ENCODE measurements at regions of chr18 and their contacts with region 1.

Region 1: DNA sequence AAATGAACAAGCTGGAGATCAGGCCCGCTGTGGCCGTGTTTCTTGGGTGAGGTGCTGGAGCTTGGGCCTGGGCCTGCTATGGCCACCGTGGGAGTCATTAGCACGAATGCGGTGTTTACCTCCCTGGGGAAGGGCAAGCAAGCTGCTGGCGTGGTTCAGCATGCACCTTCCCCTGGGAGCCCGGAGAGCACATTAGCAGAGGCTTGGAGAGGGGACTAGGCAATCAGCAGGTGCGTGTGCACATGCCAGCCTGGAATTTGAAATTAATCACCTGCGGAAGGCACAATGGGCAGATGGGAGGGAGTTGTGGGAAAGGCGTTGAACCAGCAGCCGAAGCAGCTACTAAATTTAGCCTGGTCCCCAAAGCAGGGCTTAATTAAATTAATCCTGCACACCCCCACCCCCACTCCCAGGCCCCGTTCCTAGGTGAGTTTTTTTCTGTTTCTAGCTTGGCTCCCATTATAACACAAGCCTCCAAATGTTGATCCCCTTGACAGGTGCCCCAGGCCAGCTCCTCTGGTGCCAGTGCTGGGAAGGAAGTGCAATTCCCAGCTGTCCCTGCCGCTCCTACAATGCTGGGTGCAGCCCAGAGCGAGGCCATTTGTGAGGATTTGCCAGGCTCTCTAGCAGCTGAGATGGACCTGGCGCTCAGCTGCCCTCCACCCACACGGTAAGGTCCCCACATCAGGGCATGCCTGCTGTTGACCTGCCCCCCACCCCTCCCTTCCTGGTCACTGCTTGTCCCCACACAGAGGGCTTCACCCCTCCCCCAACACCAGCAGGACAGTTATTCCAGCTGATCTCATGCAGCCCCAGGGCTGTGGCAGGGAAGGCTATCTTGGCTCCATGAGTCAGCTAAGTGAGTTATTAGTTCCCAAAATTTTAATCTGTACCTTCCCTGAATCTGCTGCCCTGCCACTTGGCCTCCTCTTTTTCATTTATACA is 115.0 kb downstream of the ZBTB7C start:
- DNase-seq: peak; percentile 68 to 82
- ATAC-seq: peak; percentile 89 to 95 (median 92)
- H3K4me3 ChIP-seq: no peak overlapping the region
- H3K27ac ChIP-seq: peak overlapping the region; percentile 78
- H3K4me1 ChIP-seq: peaks cover 25% of the 10 kb centered on the region
- H3K27me3 ChIP-seq: no peaks in the 10 kb centered on the region
- CTCF ChIP-seq: no peak

Region 2: DNA sequence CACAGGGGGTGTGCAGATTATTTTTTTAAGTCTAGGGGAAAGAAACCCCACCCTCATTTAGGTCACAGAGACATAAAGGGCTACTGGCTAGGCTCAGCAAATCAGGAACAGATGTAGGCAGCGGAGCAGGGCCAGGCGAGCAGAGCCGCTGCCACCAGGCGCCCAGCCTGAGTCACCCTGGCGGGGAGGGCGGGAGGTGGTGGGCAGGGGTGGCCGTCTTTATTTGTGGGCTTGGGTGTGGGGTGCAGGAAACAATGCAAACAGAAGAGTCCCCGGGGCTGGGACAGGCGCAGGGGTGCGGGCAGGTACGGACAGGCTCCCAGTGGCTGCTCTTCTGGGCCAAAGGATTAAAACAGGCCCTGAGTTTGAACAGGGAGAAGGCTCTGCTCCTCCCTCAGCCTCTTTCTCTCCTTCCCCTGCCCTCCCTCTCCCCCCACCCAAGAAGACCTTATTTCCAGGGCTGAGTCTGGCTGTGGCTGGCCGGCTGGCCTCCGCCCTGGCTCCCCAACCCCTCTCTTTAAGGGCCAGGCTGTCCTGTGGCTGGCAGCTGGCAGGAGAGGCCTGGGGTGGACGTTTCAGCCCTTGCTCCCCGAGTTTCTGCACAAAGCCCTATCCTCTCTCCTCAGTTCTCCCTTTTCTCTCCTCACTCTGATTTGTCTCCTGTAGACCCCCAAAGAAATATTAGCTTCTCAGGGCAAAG is 220.8 kb before region 1 on chr18:
- intact Hi-C with region 1: no loop called
- DNase-seq: peak in 1 of 2 donors; percentile 30
- ATAC-seq: peak in 3 of 4 donors; percentile 29 to 52 (median 43)
- H3K4me3 ChIP-seq: no peak overlapping the region
- H3K27ac ChIP-seq: no peak overlapping the region
- H3K4me1 ChIP-seq: peaks cover 3% of the 10 kb centered on the region
- H3K27me3 ChIP-seq: no peaks in the 10 kb centered on the region
- CTCF ChIP-seq: no peak

Region 3: GRCh38 chr18:48410095-48410920 is 116.1 kb after region 1 on chr18:
- intact Hi-C with region 1: loop called in 1 of 2 experiments (anchors 5 kb)
- DNase-seq: peak; percentile 94 to 96
- ATAC-seq: peak; percentile 97 to 99 (median 98)
- H3K4me3 ChIP-seq: peak overlapping the region; percentile 86
- H3K27ac ChIP-seq: peak overlapping the region; percentile 49
- H3K4me1 ChIP-seq: peaks cover 9% of the 10 kb centered on the region
- H3K27me3 ChIP-seq: peaks cover 0 to 41% (median 2%) of the 10 kb centered on the region in 3 donors
- CTCF ChIP-seq: no peak

Measured in psoas muscle (tissue), 8 donors.